Left cardiac atrium (tissue), 4 donors: ENCODE measurements at regions of chr19 and their contacts with region 1.

Region 1: GRCh38 chr19:51097166-51097738 is 11.0 kb downstream of the CTU1 start:
- DNase-seq: peak; percentile 72
- ATAC-seq: peak; percentile 39 to 66

Region 2: DNA sequence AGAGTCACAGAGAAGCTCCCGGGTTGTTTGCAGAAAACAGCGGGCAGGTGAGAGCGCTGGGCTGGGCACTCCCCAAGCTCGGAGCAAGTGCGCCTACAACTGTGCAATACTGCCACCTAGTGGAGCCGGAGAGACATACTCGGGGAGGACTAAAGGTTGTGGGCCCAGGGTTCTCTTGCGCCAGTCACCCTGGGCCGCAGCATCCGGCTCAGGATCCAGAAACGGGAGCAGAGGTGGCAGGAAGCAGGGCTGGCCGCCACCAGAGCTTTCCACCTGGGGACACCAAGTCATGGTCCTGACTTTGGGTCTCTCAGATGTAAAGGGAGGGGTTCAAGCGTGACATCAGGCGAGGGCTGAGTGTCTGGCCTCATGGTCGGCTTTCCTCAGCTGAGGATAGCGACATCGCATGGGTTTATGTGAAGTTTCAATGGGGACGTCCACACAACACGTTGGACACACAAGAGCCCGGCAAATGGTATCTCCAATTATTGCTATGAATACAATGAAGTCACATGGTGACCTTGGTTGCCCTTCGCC is 174.9 kb before region 1 on chr19:
- intact Hi-C with region 1: loop called in 1 of 2 experiments (anchors 5 kb)
- DNase-seq: peak; percentile 71
- ATAC-seq: peak; percentile 79 to 96

Region 3: GRCh38 chr19:50959731-50960500 is 137.3 kb before region 1 on chr19:
- intact Hi-C with region 1: no loop called
- DNase-seq: no peak
- ATAC-seq: no peak

Region 4: GRCh38 chr19:51320280-51320657 is 223.0 kb after region 1 on chr19:
- intact Hi-C with region 1: no loop called
- DNase-seq: no peak
- ATAC-seq: peak in 1 of 2 donors; percentile 14